ENCODE measurements at regions of chr12 and their contacts with region 1.

Region 1: GRCh38 chr12:93378373-93379325 is 924 bp downstream of the NUDT4 start:
- DNase-seq: peak; percentile 51 to 73
- H3K4me3 ChIP-seq: peak overlapping the region; percentile 84 to 87
- H3K27ac ChIP-seq: peak overlapping the region; percentile 93 to 96
- H3K4me1 ChIP-seq: peaks cover 0 to 48% (median 27%) of the 10 kb centered on the region in 4 donors
- H3K27me3 ChIP-seq: no peaks in the 10 kb centered on the region
- CTCF ChIP-seq: no peak

Region 2: DNA sequence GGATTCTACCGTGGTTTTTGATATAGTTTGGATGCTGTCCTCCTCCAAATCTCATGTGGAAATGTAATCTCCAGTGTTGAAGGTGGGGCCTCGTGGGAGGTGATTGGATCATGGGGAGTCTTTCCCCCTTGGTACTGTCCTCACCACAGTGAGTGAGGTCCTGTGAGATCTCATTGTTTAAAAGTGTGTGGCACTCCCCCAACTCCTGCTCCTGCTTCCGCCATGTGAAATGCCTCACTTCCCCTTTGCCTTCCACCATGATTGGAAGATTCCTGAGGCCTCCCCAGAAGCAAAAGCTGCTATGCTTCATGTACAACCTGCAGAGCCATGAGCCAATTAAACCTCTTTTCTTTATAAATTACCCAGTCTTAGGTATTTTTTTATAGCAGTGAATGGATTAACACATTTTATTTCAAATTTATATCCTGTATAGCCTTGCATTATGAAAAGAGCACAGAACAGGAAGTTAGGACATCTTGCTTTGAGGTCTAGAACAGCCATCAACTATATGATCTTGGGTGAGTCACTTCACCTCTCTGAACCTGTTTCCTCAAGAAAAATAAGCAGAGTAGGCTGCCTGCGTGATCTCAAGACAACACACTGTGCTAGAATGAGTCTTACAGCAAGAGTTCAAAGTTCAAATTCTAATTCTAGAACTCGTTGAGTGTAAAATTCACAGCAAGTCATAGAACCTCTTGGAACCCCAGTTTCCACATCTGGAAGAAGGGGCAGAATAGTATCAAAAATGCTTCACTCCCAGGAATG is 288.7 kb before region 1 on chr12:
- intact Hi-C with region 1: no loop called
- DNase-seq: no peak
- H3K4me3 ChIP-seq: no peak overlapping the region
- H3K27ac ChIP-seq: peak overlapping the region in 1 of 2 donors; percentile 2
- H3K4me1 ChIP-seq: peaks cover 0 to 11% (median 0%) of the 10 kb centered on the region in 4 donors
- H3K27me3 ChIP-seq: no peaks in the 10 kb centered on the region
- CTCF ChIP-seq: no peak

Region 3: DNA sequence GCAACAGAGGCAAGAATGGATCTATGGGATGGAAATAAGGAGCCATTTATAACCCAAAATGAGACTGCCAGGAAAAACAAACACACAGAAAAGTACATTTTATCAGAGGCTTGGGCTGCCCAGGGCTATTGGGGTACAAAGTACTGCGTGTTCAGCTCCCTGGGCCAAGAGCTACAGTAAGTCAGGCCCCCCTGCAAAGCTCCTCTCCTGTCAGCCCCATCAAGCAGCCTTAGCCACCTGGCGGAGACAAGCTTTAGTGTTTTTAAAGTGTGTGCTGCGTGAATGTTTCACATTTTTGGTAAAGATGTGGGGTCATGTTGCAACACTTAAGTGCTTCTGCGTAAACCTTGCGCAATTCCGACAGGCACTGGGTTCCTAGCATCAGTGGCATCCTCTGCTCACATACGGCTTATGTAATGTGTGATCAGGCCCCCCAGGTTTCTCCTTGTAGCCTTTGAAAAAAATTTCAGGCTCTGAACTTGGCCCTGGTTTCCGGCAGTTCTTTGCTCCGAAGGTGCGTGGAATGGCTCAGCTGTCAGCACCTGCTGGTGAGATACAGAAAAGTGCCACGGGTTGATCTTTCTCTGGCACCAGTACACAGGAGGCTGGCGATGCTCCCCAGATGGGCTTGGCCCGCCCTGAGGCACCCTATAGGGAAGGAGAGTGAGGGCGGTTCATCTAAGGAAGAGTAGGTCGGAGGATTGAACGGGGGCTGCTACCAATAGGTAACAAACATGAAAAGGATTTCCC is 250.9 kb before region 1 on chr12:
- intact Hi-C with region 1: loop called (anchors 10 kb)
- DNase-seq: peak; percentile 84 to 92
- H3K4me3 ChIP-seq: peak overlapping the region in 1 of 2 donors; percentile 27
- H3K27ac ChIP-seq: peak overlapping the region; percentile 78 to 81
- H3K4me1 ChIP-seq: peaks cover 0 to 43% (median 39%) of the 10 kb centered on the region in 4 donors
- H3K27me3 ChIP-seq: no peaks in the 10 kb centered on the region
- CTCF ChIP-seq: peak; percentile 63 to 81

Region 4: GRCh38 chr12:93243689-93244513 is 134.7 kb before region 1 on chr12:
- intact Hi-C with region 1: loop called (anchors 5 kb)
- DNase-seq: peak in 1 of 2 donors; percentile 53
- H3K4me3 ChIP-seq: no peak overlapping the region
- H3K27ac ChIP-seq: no peak overlapping the region
- H3K4me1 ChIP-seq: peaks cover 0 to 23% (median 11%) of the 10 kb centered on the region in 4 donors
- H3K27me3 ChIP-seq: no peaks in the 10 kb centered on the region
- CTCF ChIP-seq: no peak

Region 5: DNA sequence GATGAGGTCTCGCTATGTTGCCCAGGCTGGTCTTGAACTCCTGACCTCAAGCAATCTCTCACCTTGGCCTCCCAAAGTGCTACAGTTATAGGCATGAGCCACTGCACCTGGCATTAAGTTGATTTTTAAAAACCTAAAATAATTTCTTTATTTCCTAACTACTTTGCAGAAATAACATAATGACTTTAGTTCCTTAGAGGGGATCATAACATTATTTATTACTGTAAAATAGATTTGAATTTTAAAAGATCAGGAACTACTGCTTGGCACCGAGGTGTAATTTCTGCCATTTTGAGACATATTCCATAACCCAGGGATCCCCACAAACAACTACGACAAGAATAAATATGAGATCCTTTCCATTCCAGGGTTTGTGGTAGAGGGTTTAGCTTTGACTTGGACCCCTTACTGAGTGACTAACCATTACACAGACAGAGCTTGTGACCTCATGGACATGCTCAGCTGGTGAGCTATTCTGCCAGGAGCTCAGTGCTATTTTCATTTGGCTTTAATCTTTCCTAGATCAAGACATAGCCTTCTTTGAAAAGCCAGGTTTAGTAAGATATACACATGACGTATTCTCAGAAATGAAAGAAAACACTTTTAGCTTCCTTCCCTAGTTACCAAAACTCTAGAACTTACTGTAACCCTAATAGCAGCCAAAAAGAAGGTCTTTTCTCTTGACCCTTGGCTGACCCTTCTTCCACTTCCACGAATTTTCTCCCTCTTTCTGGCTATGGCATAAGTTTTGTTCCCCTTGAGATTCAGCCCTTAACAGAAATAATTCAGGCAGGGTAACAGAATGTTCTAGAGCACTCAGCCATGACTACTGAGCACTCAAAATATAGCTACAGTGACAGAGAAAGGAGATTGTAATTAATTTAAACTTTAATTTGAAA is 76.1 kb before region 1 on chr12:
- intact Hi-C with region 1: loop called (anchors 2 kb)
- DNase-seq: peak in 1 of 2 donors; percentile 42
- H3K4me3 ChIP-seq: no peak overlapping the region
- H3K27ac ChIP-seq: peak overlapping the region; percentile 70 to 72
- H3K4me1 ChIP-seq: peaks cover 0 to 48% (median 18%) of the 10 kb centered on the region in 4 donors
- H3K27me3 ChIP-seq: no peaks in the 10 kb centered on the region
- CTCF ChIP-seq: no peak

Region 6: DNA sequence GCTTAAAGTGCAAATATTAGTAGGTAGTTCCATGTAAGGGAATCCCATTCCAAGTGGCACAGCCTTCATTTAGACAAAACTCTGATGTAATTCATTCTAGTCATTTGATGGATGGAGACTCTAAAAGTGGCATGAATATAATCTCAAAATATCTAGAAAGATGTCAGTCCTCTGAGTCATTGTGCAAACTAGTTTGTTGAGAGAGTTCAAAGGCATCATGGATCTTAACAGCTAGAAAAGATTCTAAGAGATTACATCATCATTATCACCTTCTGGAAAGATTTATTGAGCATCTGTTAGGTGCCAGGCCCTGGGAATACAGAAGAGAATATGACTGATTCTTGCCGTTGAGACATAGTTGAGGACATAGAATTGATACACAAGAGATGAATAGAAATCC is 329.2 kb after region 1 on chr12:
- intact Hi-C with region 1: no loop called
- DNase-seq: no peak
- H3K4me3 ChIP-seq: no peak overlapping the region
- H3K27ac ChIP-seq: peak overlapping the region in 1 of 2 donors; percentile 52
- H3K4me1 ChIP-seq: peaks cover 0 to 68% (median 15%) of the 10 kb centered on the region in 4 donors
- H3K27me3 ChIP-seq: no peaks in the 10 kb centered on the region
- CTCF ChIP-seq: no peak